ENCODE measurements at regions of chr22 and their contacts with region 1.

Region 1: GRCh38 chr22:39482768-39483167 is 19.3 kb upstream of the MIEF1 start:
- DNase-seq: peak; percentile 43
- H3K4me3 ChIP-seq: no peak overlapping the region
- H3K27ac ChIP-seq: no peak overlapping the region
- H3K4me1 ChIP-seq: no peaks in the 10 kb centered on the region
- H3K27me3 ChIP-seq: no peaks in the 10 kb centered on the region
- CTCF ChIP-seq: no peak
- POLR2A ChIP-seq: no peak

Region 2: DNA sequence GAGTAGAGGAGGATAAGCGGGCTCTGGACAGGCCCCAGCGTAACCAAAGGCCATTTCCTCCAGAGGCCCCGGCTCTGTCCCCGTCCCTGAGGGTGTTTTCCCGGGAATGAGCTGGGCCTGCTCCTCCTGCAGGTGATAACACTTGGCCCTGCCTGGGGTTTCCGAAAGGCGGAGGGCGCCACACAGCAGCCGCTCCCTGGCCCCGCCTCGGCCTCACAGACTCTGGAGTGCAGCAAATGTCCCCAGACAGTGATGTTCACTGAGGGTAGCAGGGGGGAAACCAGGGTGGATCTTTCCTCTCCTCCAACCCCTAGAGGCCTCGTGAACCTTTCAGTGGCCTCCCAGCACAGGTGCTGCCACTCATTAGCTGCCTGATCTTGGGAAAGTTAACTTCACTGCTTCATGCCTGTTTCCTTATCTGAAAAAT is 36.5 kb before region 1 on chr22:
- CTCF ChIA-PET with region 1: no interaction called
- POLR2A ChIA-PET with region 1: no interaction called
- dilution Hi-C with region 1: no loop called
- intact Hi-C with region 1: no loop called
- DNase-seq: no peak
- H3K4me3 ChIP-seq: no peak overlapping the region
- H3K27ac ChIP-seq: no peak overlapping the region
- H3K4me1 ChIP-seq: no peaks in the 10 kb centered on the region
- H3K27me3 ChIP-seq: no peaks in the 10 kb centered on the region
- CTCF ChIP-seq: no peak
- POLR2A ChIP-seq: no peak

Region 3: DNA sequence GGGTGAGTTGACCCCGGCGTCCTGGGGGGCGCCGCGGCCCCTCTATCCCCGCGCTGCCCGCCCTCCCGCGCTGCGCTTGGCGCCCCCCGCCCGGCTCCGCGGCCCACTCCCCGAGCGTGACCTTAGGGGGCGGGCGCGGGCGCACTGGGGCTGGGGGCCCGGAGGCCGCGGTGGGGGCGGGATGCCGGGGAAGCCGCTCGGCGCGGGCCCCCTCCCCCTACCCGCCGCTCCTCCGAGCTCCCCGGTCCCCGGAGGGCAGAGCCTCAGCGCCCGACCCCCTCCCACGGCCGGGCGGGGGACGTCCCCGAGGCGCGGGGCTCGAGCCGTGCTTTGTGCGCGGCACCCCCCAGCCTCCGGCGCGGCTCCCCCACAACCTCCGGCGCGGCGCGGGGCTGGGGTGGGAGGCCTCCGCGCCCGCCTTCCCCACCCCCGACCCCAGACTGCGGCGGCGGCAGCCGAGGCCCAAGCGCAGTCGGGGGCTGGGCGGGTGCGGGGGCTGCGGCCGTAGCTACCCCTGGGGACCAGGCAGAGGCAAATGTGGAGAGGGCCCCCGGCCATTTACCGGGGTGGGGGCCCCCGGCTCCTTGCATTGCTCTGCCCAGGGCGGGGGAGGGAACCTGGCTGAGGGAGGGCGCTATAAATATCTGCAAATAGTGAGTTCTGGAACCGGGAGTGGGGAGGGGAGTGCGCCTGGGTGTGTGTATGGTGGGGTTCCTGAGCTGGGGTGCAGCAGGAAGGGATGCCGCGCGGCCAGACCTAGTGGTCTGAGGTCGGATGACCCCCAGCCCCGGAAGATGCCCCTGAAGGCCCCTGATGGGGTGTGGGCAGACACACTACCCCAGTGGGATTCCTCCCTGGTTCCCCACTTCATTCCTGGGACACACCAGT is 25.0 kb before region 1 on chr22:
- CTCF ChIA-PET with region 1: no interaction called
- POLR2A ChIA-PET with region 1: no interaction called
- dilution Hi-C with region 1: no loop called
- intact Hi-C with region 1: no loop called
- DNase-seq: no peak
- H3K4me3 ChIP-seq: no peak overlapping the region
- H3K27ac ChIP-seq: no peak overlapping the region
- H3K4me1 ChIP-seq: no peaks in the 10 kb centered on the region
- H3K27me3 ChIP-seq: peaks cover 26 to 28% of the 10 kb centered on the region in 2 experiments
- CTCF ChIP-seq: no peak
- POLR2A ChIP-seq: no peak

Region 4: DNA sequence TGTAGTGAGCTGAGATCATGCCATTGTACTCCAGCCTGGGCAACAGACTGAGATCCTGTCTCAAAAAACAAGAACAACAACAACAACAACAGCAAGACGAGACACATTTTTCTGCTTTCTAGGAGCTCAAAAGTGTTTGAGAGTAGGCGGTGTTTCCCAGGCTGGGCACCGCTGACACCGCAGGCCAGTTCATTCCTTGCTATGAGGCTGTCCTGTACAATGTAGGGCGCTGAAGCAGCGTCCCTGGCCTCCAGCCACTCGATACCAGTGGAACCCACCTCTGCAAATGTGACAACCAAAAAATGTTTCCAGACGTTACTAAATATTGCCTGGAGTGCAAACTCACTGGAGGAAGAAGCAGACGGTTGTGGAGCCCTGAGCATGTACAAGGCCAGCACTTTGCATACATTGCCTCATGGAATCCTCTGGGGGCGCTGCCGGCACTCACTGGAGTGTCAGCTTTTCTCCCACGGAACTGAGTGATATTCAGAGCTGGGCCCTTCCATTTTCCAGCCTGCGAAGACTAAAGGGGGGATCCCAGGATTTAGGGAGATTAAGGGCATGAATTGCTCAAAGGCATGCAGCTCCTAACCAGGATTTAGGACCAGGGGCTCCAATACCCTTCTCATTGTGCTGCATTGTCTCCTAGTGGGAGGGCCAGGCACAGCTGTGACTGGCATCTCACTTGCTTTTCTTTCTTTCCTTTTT is 13.5 kb after region 1 on chr22:
- CTCF ChIA-PET with region 1: interaction called, 11 read pairs
- POLR2A ChIA-PET with region 1: no interaction called
- dilution Hi-C with region 1: no loop called
- intact Hi-C with region 1: no loop called
- DNase-seq: peak; percentile 60
- H3K4me3 ChIP-seq: no peak overlapping the region
- H3K27ac ChIP-seq: no peak overlapping the region
- H3K4me1 ChIP-seq: no peaks in the 10 kb centered on the region
- H3K27me3 ChIP-seq: peaks cover 0 to 3% of the 10 kb centered on the region in 2 experiments
- CTCF ChIP-seq: peak; percentile 84 to 85
- POLR2A ChIP-seq: no peak

Region 5: GRCh38 chr22:39685336-39686177 is 202.8 kb after region 1 on chr22:
- CTCF ChIA-PET with region 1: no interaction called
- POLR2A ChIA-PET with region 1: no interaction called
- dilution Hi-C with region 1: no loop called
- intact Hi-C with region 1: no loop called
- DNase-seq: no peak
- H3K4me3 ChIP-seq: no peak overlapping the region
- H3K27ac ChIP-seq: no peak overlapping the region
- H3K4me1 ChIP-seq: no peaks in the 10 kb centered on the region
- H3K27me3 ChIP-seq: peaks cover 10 to 12% of the 10 kb centered on the region in 2 experiments
- CTCF ChIP-seq: no peak
- POLR2A ChIP-seq: no peak